Calu3 (cell line): ENCODE measurements at regions of chr5 and their contacts with region 1.

Region 1: DNA sequence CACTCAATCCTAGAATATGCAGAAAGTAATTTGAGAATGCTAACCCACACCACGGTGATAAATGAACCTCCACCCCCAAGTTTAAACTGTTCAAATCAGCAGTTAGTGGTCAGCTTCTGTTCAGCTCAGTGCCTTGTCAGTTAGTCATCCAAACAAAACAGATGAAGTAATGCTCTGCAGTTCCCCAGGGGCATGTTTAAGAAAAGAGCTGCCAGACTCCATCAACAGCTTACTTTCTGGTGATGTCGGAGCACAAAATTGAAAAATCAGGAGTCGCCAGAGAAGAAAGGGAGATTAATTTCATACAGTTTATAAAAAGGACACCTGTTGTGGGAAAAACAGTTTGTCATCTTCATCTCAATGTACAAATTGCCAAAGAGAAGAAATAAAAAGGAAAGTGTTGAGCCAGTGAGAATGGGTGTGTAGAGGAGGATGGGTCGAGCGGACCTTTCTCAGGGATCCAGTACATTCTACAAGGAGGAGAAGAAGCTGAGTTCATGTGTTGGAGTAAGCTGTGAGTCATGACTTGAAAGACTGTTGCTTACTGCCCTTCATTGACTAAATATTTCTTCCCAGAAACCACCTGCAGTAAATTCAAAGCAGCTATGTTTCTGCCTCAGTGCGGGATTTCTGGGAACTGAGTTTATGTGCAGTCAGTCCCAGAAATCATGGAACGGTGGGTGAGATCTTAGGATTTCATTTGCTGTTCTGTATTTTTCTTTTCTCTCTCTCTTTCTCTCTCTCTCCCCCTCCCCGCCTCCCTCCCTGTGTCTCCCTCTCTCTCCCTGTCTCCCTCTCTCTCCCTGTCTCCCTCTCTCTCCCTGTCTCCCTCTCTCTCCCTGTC is 13.7 kb downstream of the TRIO start:
- DNase-seq: peak; percentile 57
- H3K4me3 Mint-ChIP-seq: no peak overlapping the region
- H3K27ac Mint-ChIP-seq: no peak overlapping the region
- H3K4me1 Mint-ChIP-seq: peaks cover 25% of the 10 kb centered on the region
- H3K27me3 Mint-ChIP-seq: no peaks in the 10 kb centered on the region
- CTCF ChIP-seq: no peak

Region 2: GRCh38 chr5:14190194-14191164 is 33.6 kb after region 1 on chr5:
- CTCF ChIA-PET with region 1: interaction called, 8 read pairs
- intact Hi-C with region 1: loop called (anchors 5 kb)
- DNase-seq: peak; percentile 49
- H3K4me3 Mint-ChIP-seq: peak overlapping the region; percentile 62
- H3K27ac Mint-ChIP-seq: peak overlapping the region; percentile 82
- H3K4me1 Mint-ChIP-seq: peaks cover 74% of the 10 kb centered on the region
- H3K27me3 Mint-ChIP-seq: no peaks in the 10 kb centered on the region
- CTCF ChIP-seq: no peak

Region 3: GRCh38 chr5:14212838-14213237 is 56.0 kb after region 1 on chr5:
- CTCF ChIA-PET with region 1: interaction called, 3 read pairs
- intact Hi-C with region 1: loop called (anchors 5 kb)
- DNase-seq: no peak
- H3K4me3 Mint-ChIP-seq: peak overlapping the region; percentile 11
- H3K27ac Mint-ChIP-seq: peak overlapping the region; percentile 49
- H3K4me1 Mint-ChIP-seq: peaks cover 90% of the 10 kb centered on the region
- H3K27me3 Mint-ChIP-seq: no peaks in the 10 kb centered on the region
- CTCF ChIP-seq: no peak

Region 4: DNA sequence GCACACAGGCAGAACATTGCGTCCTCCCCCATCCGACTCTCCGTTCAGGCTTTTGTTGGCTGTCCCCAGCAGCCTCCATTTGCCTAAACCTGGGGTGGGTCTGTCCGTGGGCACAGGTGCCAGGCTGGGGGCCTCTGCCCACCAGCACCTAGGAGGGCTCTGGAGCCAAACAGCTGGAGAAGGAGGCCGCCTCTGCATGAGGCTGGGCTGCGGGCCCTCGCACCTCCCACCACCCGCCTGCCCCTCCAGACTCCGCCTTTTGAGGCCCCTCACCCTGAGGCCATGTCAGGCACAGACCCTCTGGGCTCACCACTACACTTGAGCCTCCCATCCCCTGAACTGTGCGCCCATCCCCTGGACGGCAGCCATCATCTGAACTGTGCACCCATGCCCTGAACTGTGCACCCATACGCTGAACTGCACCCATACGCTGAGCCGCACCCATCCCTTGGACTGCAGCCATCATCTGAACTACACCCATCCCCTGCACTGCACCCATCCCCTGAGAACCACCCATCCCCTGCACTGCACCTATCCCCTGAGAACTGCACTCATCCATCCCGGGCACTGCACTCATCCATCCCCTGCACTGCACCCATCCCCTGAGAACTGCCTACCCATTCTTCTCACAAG is 326.8 kb after region 1 on chr5:
- CTCF ChIA-PET with region 1: no interaction called
- intact Hi-C with region 1: no loop called
- DNase-seq: no peak
- H3K4me3 Mint-ChIP-seq: no peak overlapping the region
- H3K27ac Mint-ChIP-seq: no peak overlapping the region
- H3K4me1 Mint-ChIP-seq: no peaks in the 10 kb centered on the region
- H3K27me3 Mint-ChIP-seq: no peaks in the 10 kb centered on the region
- CTCF ChIP-seq: no peak